BJ (cell line): ENCODE measurements at regions of chr12 and their contacts with region 1.

Region 1: GRCh38 chr12:59040656-59041055 is 120.4 kb upstream of the LRIG3 start:
- DNase-seq: peak; percentile 70
- H3K4me3 ChIP-seq: no peak overlapping the region
- H3K27me3 ChIP-seq: no peaks in the 10 kb centered on the region
- CTCF ChIP-seq: no peak

Region 2: GRCh38 chr12:58425481-58426392 is 614.9 kb before region 1 on chr12:
- CTCF ChIA-PET with region 1: no interaction called
- POLR2A ChIA-PET with region 1: interaction called, 22 read pairs
- DNase-seq: peak; percentile 89
- H3K4me3 ChIP-seq: no peak overlapping the region
- H3K27me3 ChIP-seq: no peaks in the 10 kb centered on the region
- CTCF ChIP-seq: no peak

Region 3: DNA sequence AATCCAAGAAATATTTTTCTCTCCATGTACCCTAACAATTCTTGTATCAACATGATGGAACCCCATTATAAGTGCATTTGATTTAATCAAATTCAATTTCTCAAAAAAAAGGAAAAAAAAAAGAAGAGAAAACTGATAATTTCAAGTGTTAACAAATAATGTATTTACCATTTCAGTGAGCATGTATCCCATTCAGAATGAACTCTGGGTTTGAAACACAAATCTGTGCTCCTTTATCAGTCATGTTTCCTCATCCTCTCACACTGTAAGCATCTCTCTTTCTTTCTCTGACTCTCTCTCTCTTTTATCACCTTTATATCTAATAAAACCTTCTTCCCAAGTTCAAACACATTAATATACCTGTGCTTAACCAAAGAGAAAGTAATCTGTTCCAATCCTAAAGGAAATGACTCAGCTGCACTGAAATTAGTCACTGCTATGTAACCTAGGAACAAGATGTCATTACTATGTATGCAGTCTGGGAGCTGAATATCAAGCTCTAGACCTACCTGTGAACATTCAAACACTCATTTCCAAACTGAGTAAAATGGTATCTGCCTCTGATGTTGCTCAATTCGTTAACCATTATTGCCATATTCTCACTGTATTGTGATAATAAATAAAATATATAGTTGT is 14.7 kb after region 1 on chr12:
- CTCF ChIA-PET with region 1: no interaction called
- POLR2A ChIA-PET with region 1: no interaction called
- DNase-seq: peak; percentile 45
- H3K4me3 ChIP-seq: no peak overlapping the region
- H3K27me3 ChIP-seq: no peaks in the 10 kb centered on the region
- CTCF ChIP-seq: no peak